Activated B cell treated with CpG ODN at 0.5 μM for 24 hours (primary cell): ENCODE measurements at regions of chr14 and their contacts with region 1.

Region 1: GRCh38 chr14:34461334-34462131 is 507 bp downstream of the SPTSSA start:
- DNase-seq: no peak
- ATAC-seq: no peak
- H3K4me3 Mint-ChIP-seq: peak overlapping the region; percentile 88
- H3K27ac Mint-ChIP-seq: peak overlapping the region; percentile 76
- H3K4me1 Mint-ChIP-seq: peaks cover 15% of the 10 kb centered on the region
- H3K27me3 Mint-ChIP-seq: no peaks in the 10 kb centered on the region
- CTCF ChIP-seq: no peak

Region 2: DNA sequence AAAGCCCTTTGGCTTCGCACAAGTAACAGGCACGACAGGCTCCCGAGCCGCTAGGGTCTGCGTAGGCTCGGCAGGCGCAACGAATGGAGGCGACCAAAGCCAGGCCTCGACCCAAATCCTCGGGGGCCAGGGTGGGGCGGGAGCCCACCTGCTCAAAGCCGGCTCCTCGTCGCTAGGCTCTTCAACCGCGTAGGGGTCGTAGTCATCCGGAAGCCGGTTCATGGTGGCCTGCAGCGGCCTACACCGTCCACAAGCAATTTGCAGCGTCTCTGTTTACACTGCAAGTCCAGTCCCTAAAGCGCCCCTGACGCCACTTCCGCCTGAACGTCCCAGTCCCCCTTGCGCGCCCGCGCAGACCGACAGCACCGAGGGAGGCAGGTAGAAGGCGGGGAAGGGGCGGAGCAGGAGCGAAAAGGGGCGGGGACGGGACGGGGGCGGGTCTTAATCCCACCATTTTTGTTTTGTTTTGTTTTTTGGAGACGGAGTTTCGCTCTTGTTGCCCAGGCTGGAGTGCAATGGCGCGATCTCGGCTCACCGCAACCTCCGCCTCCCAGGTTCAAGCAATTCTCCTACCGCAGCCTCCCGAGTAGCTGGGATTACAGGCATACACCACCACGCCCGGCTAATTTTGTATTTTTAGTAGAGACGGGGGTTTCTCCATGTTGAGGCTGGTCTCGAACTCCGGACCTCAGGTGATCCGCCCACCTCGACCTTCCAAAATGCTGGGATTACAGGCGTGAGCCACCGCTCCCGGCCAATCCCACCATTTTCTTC is 78.1 kb after region 1 on chr14 and contains the start of gene EAPP:
- CTCF ChIA-PET with region 1: no interaction called
- POLR2A ChIA-PET with region 1: no interaction called
- intact Hi-C with region 1: loop called (anchors 5 kb)
- DNase-seq: peak; percentile 86
- ATAC-seq: peak; percentile 99
- H3K4me3 Mint-ChIP-seq: peak within 1 kb of the TSS; percentile 99
- H3K27ac Mint-ChIP-seq: peak within 1 kb of the TSS; percentile 97
- H3K4me1 Mint-ChIP-seq: peaks cover 34% of the 10 kb centered on the region
- H3K27me3 Mint-ChIP-seq: no peaks in the 10 kb centered on the region
- CTCF ChIP-seq: no peak
- total RNA-seq, gene EAPP: 40.7 and 43.2 TPM in 2 replicates

Region 3: GRCh38 chr14:36320200-36320896 is 1858.8 kb after region 1 on chr14 and contains the start of gene MBIP:
- CTCF ChIA-PET with region 1: no interaction called
- POLR2A ChIA-PET with region 1: no interaction called
- intact Hi-C with region 1: loop called (anchors 5 kb)
- DNase-seq: peak; percentile 55
- ATAC-seq: peak; percentile 99
- H3K4me3 Mint-ChIP-seq: peak within 1 kb of the TSS; percentile 97
- H3K27ac Mint-ChIP-seq: peak within 1 kb of the TSS; percentile 89
- H3K4me1 Mint-ChIP-seq: peaks cover 23% of the 10 kb centered on the region
- H3K27me3 Mint-ChIP-seq: peaks cover 15% of the 10 kb centered on the region
- CTCF ChIP-seq: no peak
- total RNA-seq, gene MBIP: 17.0 and 21.7 TPM in 2 replicates